Gastrocnemius medialis (tissue), 4 donors: ENCODE measurements at regions of chr4 and their contacts with region 1.

Region 1: DNA sequence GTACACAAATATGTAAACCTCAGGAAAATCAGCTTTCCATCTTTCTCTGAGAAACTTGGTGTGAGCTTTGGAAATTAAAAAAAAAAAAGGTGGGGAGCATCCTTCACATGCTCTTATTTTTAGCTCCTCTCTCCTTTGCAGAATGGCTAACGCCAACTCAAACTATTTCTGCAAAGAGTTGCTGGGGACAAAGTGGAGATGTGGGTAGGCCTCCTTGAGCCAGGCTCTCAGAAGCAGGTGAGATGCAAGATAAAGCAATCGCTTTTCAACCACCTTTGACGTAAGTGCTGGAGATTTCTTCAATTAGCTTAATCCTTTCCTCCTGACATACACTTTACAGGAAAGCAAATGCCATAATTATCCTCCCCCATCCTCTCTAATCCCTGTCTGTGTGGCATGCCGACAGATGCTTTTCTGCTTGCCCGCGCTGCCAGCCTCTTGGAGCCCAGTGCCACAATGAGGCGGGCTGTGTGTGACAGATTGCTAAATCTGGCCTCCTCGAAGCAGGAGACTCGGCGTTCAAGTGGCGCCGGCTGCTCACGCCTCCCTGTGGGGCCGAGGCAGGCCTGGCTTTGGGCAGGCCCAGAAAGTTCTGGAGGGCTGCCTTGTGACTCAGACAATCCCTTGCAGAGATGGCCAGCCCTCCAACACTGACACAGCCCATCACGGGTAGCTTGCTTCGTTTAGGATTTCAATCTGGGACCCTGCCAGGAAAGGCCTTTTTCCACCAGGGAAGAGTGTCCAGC is 64.9 kb upstream of the SOD3 start:
- DNase-seq: peak; percentile 81 to 93
- ATAC-seq: peak; percentile 90 to 98
- H3K4me3 ChIP-seq: no peak overlapping the region
- H3K27ac ChIP-seq: peak overlapping the region; percentile 29 to 77 (median 64)
- H3K4me1 ChIP-seq: peaks cover 18 to 19% of the 10 kb centered on the region in 2 donors
- H3K27me3 ChIP-seq: no peaks in the 10 kb centered on the region
- CTCF ChIP-seq: peak in 1 of 5 experiments; percentile 13
- POLR2A ChIP-seq: peak in 1 of 2 donors; percentile 19

Region 2: GRCh38 chr4:24488399-24489164 is 241.8 kb before region 1 on chr4:
- in situ Hi-C with region 1: no loop called
- intact Hi-C with region 1: no loop called
- DNase-seq: peak in 1 of 2 donors; percentile 45
- ATAC-seq: peak; percentile 49 to 76
- H3K4me3 ChIP-seq: no peak overlapping the region
- H3K27ac ChIP-seq: no peak overlapping the region
- H3K4me1 ChIP-seq: peaks cover 0 to 5% of the 10 kb centered on the region in 2 donors
- H3K27me3 ChIP-seq: no peaks in the 10 kb centered on the region
- CTCF ChIP-seq: peak; percentile 46 to 79 (median 68)
- POLR2A ChIP-seq: no peak

Region 3: DNA sequence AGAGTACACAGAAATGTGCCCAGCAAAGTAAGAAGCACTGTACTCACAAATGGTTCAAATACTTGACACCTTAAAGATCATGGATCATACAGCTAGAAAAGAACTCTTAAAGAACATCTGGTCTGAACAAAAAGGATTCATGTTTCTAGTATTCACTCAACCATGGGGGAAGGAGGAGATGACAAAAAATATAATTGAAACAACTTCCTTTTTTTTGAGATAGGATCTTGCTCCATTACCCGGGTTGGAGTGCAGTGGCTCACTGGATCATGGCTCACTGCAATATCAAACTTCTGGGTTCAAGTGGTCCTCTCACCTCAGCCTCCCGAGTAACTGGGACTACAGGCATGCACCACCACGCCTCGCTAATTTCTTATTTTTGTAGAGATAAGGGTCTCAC is 152.1 kb before region 1 on chr4:
- in situ Hi-C with region 1: no loop called
- intact Hi-C with region 1: no loop called
- DNase-seq: no peak
- ATAC-seq: no peak
- H3K4me3 ChIP-seq: no peak overlapping the region
- H3K27ac ChIP-seq: no peak overlapping the region
- H3K4me1 ChIP-seq: peaks cover 67 to 68% of the 10 kb centered on the region in 2 donors
- H3K27me3 ChIP-seq: no peaks in the 10 kb centered on the region
- CTCF ChIP-seq: no peak
- POLR2A ChIP-seq: no peak

Region 4: GRCh38 chr4:24719615-24720014 is 10.8 kb before region 1 on chr4:
- in situ Hi-C with region 1: no loop called
- intact Hi-C with region 1: no loop called
- DNase-seq: no peak
- ATAC-seq: no peak
- H3K4me3 ChIP-seq: no peak overlapping the region
- H3K27ac ChIP-seq: no peak overlapping the region
- H3K4me1 ChIP-seq: no peaks in the 10 kb centered on the region
- H3K27me3 ChIP-seq: no peaks in the 10 kb centered on the region
- CTCF ChIP-seq: no peak
- POLR2A ChIP-seq: no peak

Region 5: GRCh38 chr4:24781999-24782745 is 51.7 kb after region 1 on chr4:
- in situ Hi-C with region 1: no loop called
- intact Hi-C with region 1: loop called (anchors 5 kb)
- DNase-seq: no peak
- ATAC-seq: peak; percentile 58 to 67
- H3K4me3 ChIP-seq: no peak overlapping the region
- H3K27ac ChIP-seq: peak overlapping the region in 3 of 4 donors; percentile 34 to 47 (median 38)
- H3K4me1 ChIP-seq: peaks cover 7 to 16% of the 10 kb centered on the region in 2 donors
- H3K27me3 ChIP-seq: no peaks in the 10 kb centered on the region
- CTCF ChIP-seq: no peak
- POLR2A ChIP-seq: no peak